Left ventricle myocardium inferior (tissue), 1 donor: ENCODE measurements at regions of chr17 and their contacts with region 1.

Region 1: GRCh38 chr17:36048066-36048465 is 16.0 kb upstream of the CCL18 start:
- DNase-seq: no peak
- H3K4me3 ChIP-seq: no peak overlapping the region
- H3K27ac ChIP-seq: no peak overlapping the region
- H3K4me1 ChIP-seq: no peaks in the 10 kb centered on the region
- H3K27me3 ChIP-seq: peaks cover 14% of the 10 kb centered on the region
- CTCF ChIP-seq: no peak

Region 2: DNA sequence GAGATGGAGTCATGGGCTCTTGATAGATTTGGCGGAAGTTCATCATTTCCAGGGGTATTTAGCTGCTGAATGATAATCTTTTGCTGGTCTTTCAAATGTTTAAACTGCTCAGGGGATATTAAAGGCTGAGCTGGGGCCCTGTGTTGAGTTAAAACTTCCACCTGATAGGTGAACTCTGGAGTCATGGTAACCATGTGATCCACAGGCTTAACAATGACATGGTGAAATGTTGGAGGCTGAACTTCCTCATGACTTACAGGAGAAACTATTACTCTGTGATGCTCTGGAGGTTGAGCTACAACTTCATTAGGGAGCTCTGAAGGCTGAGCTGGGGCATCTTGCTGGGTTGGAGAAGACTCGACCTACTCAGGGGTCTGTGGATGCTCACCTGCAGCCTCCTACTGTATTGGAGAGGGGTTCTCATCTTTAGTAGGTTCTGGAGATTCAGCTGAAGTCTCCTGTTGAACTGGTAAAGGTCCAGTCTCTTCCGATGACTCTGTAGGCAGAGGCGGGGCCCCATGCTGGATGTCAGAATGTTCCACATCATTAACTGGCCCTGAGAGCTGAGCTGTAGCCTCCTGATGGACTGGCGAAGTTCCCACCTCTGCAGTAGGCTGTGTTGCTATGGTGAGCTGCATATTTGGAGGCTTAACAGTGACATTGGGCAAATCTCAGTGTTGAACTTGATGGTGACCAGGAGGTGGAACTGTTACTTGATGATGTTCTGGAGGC is 141.7 kb before region 1 on chr17:
- intact Hi-C with region 1: no loop called
- DNase-seq: no peak
- H3K4me3 ChIP-seq: no peak overlapping the region
- H3K27ac ChIP-seq: no peak overlapping the region
- H3K4me1 ChIP-seq: no peaks in the 10 kb centered on the region
- H3K27me3 ChIP-seq: peaks cover 36% of the 10 kb centered on the region
- CTCF ChIP-seq: no peak

Region 3: GRCh38 chr17:36089888-36090836 is 42.1 kb after region 1 on chr17 and contains the start of gene CCL3:
- intact Hi-C with region 1: loop called (anchors 10 kb)
- DNase-seq: no peak
- H3K4me3 ChIP-seq: no peak within 1 kb of the TSS
- H3K27ac ChIP-seq: no peak within 1 kb of the TSS
- H3K4me1 ChIP-seq: no peaks in the 10 kb centered on the region
- H3K27me3 ChIP-seq: peaks cover 40% of the 10 kb centered on the region
- CTCF ChIP-seq: no peak
- total RNA-seq, gene CCL3: not detected